Psoas muscle (tissue), 8 donors: ENCODE measurements at regions of chr1 and their contacts with region 1.

Region 1: DNA sequence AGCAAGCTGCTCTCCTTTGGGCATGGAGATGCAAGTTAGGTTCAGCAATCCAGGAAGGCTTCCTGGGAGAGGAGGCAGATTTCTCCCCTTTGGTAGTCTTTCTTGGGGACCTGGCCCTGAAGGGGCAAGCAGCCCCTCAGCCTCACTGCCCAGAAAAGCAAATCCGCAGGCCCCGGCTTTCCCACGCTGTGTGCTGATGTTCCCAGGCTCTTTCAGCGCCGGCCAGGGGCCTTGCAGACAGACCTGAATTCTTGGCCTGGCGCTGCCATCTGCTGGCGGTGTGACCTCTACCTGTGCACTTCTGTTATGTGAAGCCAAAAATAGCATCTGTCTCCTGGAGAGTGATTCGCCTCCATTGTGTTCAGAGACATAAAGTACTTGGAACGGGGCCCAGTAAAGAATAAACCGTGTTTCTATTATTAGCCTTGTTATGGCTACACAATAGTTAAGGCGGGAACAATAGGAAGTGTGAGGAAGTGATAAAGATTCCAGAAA is 64.8 kb downstream of the ALPL start:
- DNase-seq: peak; percentile 66 to 75
- ATAC-seq: peak; percentile 65 to 91 (median 86)
- H3K4me3 ChIP-seq: no peak overlapping the region
- H3K27ac ChIP-seq: peak overlapping the region; percentile 33
- H3K4me1 ChIP-seq: no peaks in the 10 kb centered on the region
- H3K27me3 ChIP-seq: peaks cover 0 to 11% (median 4%) of the 10 kb centered on the region in 3 donors
- CTCF ChIP-seq: peak; percentile 49

Region 2: DNA sequence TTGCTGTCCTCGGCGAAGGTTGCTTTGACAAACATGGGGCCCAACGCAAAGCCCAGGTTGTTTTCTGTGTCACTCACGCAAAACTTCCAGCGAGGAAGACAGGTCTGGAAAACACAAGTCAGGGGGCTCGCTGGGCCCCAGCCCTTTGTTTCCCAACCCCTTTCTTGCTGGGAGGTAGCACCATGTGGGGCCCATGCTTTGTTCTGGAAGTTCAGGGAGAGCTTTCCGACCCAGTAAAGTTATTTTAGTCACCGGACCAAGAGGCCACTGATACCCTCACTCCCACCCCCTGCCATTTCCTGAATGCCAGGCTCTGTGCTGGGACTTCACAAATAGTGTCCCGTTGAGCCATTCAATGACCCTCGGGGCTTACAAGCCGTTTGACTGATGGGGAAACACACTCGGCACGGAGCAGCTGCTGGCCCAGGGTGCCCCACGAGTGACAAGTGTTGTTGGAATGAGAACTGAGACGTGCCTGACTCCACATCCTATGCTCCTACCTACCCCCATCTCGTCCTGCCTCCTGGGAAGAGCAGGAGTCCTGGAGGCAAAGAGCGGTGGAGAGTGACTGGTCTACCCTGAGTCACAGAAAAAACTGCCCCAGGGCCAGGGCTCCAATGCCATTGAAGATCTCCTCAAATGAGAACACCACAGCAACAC is 335.7 kb before region 1 on chr1:
- intact Hi-C with region 1: loop called in 1 of 2 experiments (anchors 5 kb)
- DNase-seq: no peak
- ATAC-seq: no peak
- H3K4me3 ChIP-seq: no peak overlapping the region
- H3K27ac ChIP-seq: no peak overlapping the region
- H3K4me1 ChIP-seq: no peaks in the 10 kb centered on the region
- H3K27me3 ChIP-seq: no peaks in the 10 kb centered on the region
- CTCF ChIP-seq: no peak

Region 3: DNA sequence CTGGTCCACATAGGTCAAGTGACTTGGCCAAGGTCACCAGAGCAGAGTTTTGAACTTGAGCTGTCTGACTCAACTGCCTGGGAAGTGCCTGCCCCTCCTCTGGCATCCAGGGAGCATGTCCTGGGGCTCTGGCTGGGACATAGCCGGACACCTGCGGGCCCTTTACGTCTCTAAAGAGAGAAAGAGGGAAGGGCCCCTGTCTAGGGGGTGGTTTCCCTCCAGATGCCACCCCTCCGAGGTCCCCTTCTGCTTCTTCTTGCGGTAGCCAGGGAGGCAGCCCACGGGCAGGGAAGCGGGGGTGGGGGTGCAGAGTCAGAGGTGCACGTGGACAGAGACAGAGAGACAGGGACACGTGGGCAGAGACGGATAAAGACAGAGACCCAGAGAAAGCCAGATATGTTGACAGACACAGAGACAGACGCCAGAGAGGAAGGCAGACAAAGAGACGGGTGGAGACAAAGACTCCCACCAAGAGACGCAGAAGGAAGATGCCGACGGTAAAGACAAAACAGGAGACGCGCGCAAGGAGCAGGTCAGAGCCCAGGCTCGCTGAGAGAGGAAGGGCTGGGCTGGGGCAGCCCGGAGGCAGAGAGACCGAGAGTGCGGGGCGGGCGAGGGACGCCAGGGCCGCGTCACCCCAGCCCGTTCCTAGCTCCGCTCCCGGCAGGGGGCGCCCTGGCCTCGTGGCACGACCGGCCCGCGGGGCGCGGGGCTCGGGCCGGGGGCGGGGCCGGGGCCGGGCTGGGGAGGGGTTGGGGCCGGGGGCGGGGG is 65.3 kb before region 1 on chr1:
- intact Hi-C with region 1: loop called in 1 of 2 experiments (anchors 2 kb)
- DNase-seq: peak; percentile 72 to 78
- ATAC-seq: peak; percentile 54 to 80 (median 76)
- H3K4me3 ChIP-seq: peak overlapping the region; percentile 45
- H3K27ac ChIP-seq: no peak overlapping the region
- H3K4me1 ChIP-seq: no peaks in the 10 kb centered on the region
- H3K27me3 ChIP-seq: peaks cover 0 to 53% (median 10%) of the 10 kb centered on the region in 3 donors
- CTCF ChIP-seq: peak; percentile 59

Region 4: DNA sequence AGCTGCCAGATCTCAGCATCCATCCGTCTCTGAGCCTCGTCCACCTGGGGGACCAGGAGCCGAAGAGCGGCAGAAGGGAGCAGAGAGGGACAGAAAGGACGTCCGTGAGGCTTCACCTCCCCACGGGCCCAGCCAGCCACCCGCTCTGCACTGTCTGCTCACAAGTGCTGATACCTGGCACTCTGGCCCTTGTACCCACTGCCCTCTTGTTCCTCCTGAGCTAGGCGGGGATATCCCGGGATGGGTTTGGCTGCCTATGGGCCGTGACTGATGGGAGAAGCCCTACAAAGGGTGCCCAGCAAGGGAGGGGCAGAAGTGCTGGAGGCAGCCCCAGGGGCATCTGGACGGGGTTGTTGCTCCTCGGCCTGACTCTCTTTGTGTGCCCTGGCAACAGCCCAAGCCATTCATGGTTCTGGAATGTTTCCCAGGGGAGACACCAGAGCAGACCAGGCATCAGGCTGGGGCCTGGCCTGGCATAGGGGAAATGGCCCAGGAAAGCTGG is 295.7 kb after region 1 on chr1:
- intact Hi-C with region 1: no loop called
- DNase-seq: peak; percentile 82 to 88
- ATAC-seq: peak; percentile 54 to 80 (median 66)
- H3K4me3 ChIP-seq: no peak overlapping the region
- H3K27ac ChIP-seq: peak overlapping the region; percentile 27
- H3K4me1 ChIP-seq: peaks cover 7% of the 10 kb centered on the region
- H3K27me3 ChIP-seq: no peaks in the 10 kb centered on the region
- CTCF ChIP-seq: no peak